ENCODE measurements at regions of chr2 and their contacts with region 1.

Region 1: GRCh38 chr2:168118733-168119514 is 128.5 kb downstream of the STK39 start:
- DNase-seq: no peak
- ATAC-seq: peak; percentile 92
- H3K4me3 ChIP-seq: no peak overlapping the region
- H3K27ac ChIP-seq: no peak overlapping the region
- H3K4me1 ChIP-seq: no peaks in the 10 kb centered on the region
- H3K27me3 ChIP-seq: 0 out of 4 replicates have a peak, but pooled peaks cover 0 to 6% of the 10 kb centered on the region in 2 experiments
- CTCF ChIP-seq: peak; percentile 51 to 64 (median 58)
- EP300 ChIP-seq: no peak
- POLR2A ChIP-seq: no peak
- RAD21 ChIP-seq: peak; percentile 76

Region 2: GRCh38 chr2:166539340-166540162 is 1579.4 kb before region 1 on chr2:
- CTCF ChIA-PET with region 1: interaction called, 59 read pairs
- POLR2A ChIA-PET with region 1: no interaction called
- RAD21 ChIA-PET with region 1: interaction called, 7 read pairs
- SMC1A ChIA-PET with region 1: interaction called, 11 read pairs
- in situ Hi-C with region 1: loop called (anchors 5 kb)
- intact Hi-C with region 1: loop called (anchors 2 kb)
- DNase-seq: peak; percentile 12
- ATAC-seq: peak; percentile 94
- H3K4me3 ChIP-seq: no peak overlapping the region
- H3K27ac ChIP-seq: no peak overlapping the region
- H3K4me1 ChIP-seq: no peaks in the 10 kb centered on the region
- H3K27me3 ChIP-seq: no peaks in the 10 kb centered on the region
- CTCF ChIP-seq: peak; percentile 71 to 83 (median 74)
- EP300 ChIP-seq: no peak
- POLR2A ChIP-seq: no peak
- RAD21 ChIP-seq: peak; percentile 90

Region 3: DNA sequence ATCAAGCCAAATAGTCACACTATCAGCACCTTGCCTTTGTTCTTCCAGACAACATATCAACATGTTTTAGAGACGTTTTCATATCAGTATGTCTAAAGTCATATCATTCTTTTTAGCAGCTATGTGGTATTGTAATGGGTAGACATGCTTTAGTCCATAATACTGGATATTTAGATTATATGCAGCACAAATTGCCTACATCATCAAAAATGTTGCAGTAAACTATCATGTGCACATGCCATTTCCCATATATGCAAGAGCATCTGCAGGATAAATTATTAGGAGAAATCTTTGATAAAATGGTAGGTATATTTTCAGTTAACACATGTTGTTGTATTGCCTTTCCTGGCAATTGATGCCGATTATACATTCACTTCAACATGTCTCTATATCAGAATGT is 594.1 kb before region 1 on chr2:
- CTCF ChIA-PET with region 1: no interaction called
- POLR2A ChIA-PET with region 1: no interaction called
- RAD21 ChIA-PET with region 1: no interaction called
- SMC1A ChIA-PET with region 1: no interaction called
- in situ Hi-C with region 1: no loop called
- intact Hi-C with region 1: no loop called
- DNase-seq: no peak
- ATAC-seq: no peak
- H3K4me3 ChIP-seq: no peak overlapping the region
- H3K27ac ChIP-seq: no peak overlapping the region
- H3K4me1 ChIP-seq: no peaks in the 10 kb centered on the region
- H3K27me3 ChIP-seq: 0 out of 4 replicates have a peak, but pooled peaks cover 0 to 2% of the 10 kb centered on the region in 2 experiments
- CTCF ChIP-seq: no peak
- EP300 ChIP-seq: no peak
- POLR2A ChIP-seq: no peak
- RAD21 ChIP-seq: no peak

Region 4: GRCh38 chr2:167756446-167756845 is 362.5 kb before region 1 on chr2:
- CTCF ChIA-PET with region 1: no interaction called
- POLR2A ChIA-PET with region 1: no interaction called
- RAD21 ChIA-PET with region 1: no interaction called
- SMC1A ChIA-PET with region 1: no interaction called
- in situ Hi-C with region 1: no loop called
- intact Hi-C with region 1: loop called (anchors 10 kb)
- DNase-seq: no peak
- ATAC-seq: no peak
- H3K4me3 ChIP-seq: no peak overlapping the region
- H3K27ac ChIP-seq: no peak overlapping the region
- H3K4me1 ChIP-seq: no peaks in the 10 kb centered on the region
- H3K27me3 ChIP-seq: no peaks in the 10 kb centered on the region
- CTCF ChIP-seq: no peak
- EP300 ChIP-seq: no peak
- POLR2A ChIP-seq: no peak
- RAD21 ChIP-seq: no peak

Region 5: DNA sequence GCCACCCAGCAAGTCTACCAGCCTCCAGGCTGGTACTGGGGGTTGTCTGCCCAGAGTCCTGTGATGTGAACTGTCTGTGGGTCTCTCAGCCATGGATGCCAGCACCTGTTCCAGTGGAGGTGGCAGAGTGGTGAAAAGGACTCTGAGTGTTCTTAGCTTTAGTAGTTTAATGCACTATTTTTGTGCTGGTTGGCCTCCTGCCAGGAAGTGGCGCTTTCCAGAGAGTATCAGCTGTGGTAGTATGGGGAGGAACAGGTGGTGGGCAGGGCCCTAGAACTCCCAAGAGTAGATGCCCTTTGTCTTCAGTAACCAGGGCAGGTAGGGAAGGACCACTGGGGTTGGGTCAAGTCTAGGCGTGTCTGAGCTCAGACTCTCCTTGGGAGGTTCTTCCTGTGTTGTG is 228.2 kb before region 1 on chr2:
- CTCF ChIA-PET with region 1: no interaction called
- POLR2A ChIA-PET with region 1: no interaction called
- RAD21 ChIA-PET with region 1: no interaction called
- SMC1A ChIA-PET with region 1: no interaction called
- in situ Hi-C with region 1: no loop called
- intact Hi-C with region 1: no loop called
- DNase-seq: no peak
- ATAC-seq: no peak
- H3K4me3 ChIP-seq: no peak overlapping the region
- H3K27ac ChIP-seq: no peak overlapping the region
- H3K4me1 ChIP-seq: no peaks in the 10 kb centered on the region
- H3K27me3 ChIP-seq: no peaks in the 10 kb centered on the region
- CTCF ChIP-seq: no peak
- EP300 ChIP-seq: no peak
- POLR2A ChIP-seq: no peak
- RAD21 ChIP-seq: no peak

Region 6: DNA sequence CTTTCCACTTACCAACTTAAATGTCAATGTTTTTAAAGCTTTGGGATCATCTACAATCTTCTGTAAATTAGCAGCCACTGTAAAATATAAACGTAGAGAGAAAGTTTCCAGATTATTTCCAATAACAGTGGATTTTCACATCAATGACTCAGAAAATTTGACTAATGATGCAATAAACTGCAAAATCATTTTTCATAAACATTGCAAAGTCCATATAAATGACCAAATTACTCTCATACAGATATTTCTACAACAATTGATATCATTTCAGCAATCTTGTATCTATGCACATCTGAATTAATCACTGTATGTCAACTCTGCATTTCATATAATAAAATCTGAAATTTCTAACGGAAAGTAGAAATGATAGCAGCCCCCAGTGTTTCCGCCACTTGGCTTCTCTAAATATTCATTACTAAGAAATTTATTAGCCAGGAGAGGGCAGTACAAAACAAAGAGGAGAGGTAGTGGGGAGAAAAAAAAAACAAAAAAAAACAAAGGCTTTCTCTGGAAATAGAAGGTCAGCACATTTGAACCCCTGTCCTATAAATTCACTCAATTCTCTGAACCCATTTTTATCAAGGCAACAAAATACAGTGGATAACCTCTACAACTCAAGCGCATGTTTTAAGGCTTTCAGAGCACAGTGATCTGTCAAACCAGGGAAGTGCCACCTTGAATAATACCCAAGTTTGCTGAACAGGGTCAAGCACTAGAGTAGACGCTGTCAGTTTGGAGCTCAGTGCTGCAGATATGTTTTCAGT is 154.1 kb before region 1 on chr2:
- CTCF ChIA-PET with region 1: interaction called, 46 read pairs
- POLR2A ChIA-PET with region 1: no interaction called
- RAD21 ChIA-PET with region 1: interaction called, 10 read pairs
- SMC1A ChIA-PET with region 1: interaction called, 20 read pairs
- in situ Hi-C with region 1: no loop called
- intact Hi-C with region 1: loop called (anchors 1 kb)
- DNase-seq: no peak
- ATAC-seq: 0 out of 3 replicates have a peak, but pooled peaks have one; percentile 30
- H3K4me3 ChIP-seq: no peak overlapping the region
- H3K27ac ChIP-seq: no peak overlapping the region
- H3K4me1 ChIP-seq: no peaks in the 10 kb centered on the region
- H3K27me3 ChIP-seq: no peaks in the 10 kb centered on the region; a peak in 1 of 4 replicates
- CTCF ChIP-seq: peak in 1 of 3 experiments; percentile 34; a peak in 2 of 6 replicates
- EP300 ChIP-seq: no peak
- POLR2A ChIP-seq: no peak
- RAD21 ChIP-seq: 0 out of 2 replicates have a peak, but pooled peaks have one; percentile 6

Region 7: GRCh38 chr2:168130346-168130745 is 11.4 kb after region 1 on chr2:
- CTCF ChIA-PET with region 1: interaction called, 24 read pairs
- POLR2A ChIA-PET with region 1: no interaction called
- RAD21 ChIA-PET with region 1: no interaction called
- SMC1A ChIA-PET with region 1: interaction called, 16 read pairs
- in situ Hi-C with region 1: no loop called
- intact Hi-C with region 1: no loop called
- DNase-seq: no peak
- ATAC-seq: no peak
- H3K4me3 ChIP-seq: no peak overlapping the region
- H3K27ac ChIP-seq: no peak overlapping the region
- H3K4me1 ChIP-seq: no peaks in the 10 kb centered on the region
- H3K27me3 ChIP-seq: peaks cover 0 to 2% of the 10 kb centered on the region in 2 experiments; a peak in 1 of 4 replicates
- CTCF ChIP-seq: no peak
- EP300 ChIP-seq: no peak
- POLR2A ChIP-seq: no peak
- RAD21 ChIP-seq: no peak

Measured in GM12878 (cell line).